GM12878 (cell line): ENCODE measurements at regions of chr1 and their contacts with region 1.

Region 1: DNA sequence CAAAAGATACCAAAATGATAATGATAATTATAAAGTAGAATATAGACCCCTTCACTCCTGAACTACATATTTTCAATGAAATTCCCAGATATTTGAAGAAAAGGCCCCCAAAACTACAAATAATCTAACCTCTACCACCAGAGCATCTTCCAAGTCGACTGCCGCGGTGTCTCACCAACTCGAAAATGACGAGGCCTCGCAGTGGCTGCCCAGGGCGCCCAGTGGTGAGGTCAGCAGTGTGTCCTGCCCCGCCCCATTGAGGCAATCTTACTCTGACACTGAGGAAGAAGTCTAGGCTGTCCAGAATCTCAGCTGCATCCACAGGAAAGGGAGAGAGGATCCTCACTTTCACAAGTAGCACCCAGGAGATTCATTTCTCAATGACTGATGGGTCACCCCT is 5.2 kb downstream of the DUSP10 start:
- DNase-seq: no peak
- ATAC-seq: peak; percentile 47
- H3K4me3 ChIP-seq: peak overlapping the region; percentile 90
- H3K27ac ChIP-seq: no peak overlapping the region
- H3K4me1 ChIP-seq: peaks cover 11% of the 10 kb centered on the region
- H3K27me3 ChIP-seq: no peaks in the 10 kb centered on the region
- CTCF ChIP-seq: no peak
- EP300 ChIP-seq: no peak
- POLR2A ChIP-seq: 0 out of 2 replicates have a peak, but pooled peaks have one; percentile 25
- RAD21 ChIP-seq: no peak

Region 2: DNA sequence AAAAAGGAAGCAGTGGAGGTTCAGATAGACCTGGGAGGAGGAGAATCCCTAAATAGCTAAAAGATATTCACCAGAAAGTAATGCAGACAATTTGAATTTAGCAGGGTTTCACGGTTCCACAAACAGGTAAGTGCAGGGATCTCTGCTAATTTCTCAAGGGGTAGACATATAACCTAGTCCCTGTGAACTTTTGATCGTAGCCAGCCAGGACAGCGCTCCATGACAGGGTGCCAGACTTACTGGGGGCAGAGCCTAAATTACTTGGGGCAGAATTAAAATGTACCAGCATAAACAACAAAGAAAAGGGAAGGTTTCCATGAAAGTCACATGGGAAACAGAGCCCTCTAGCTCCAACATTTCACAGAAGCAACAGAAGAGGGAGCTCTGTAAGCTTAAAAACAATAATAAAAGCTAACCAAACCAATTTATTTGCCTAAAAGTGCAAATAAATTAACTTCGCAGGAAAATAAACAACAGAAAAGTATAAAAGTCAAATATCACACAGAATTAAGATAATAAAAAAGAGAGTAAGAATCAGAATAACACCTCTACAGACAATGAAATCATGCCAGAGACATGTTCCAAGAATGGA is 193.1 kb before region 1 on chr1:
- CTCF ChIA-PET with region 1: interaction called, 45 read pairs
- POLR2A ChIA-PET with region 1: no interaction called
- RAD21 ChIA-PET with region 1: interaction called, 50 read pairs
- SMC1A ChIA-PET with region 1: interaction called, 52 read pairs
- in situ Hi-C with region 1: no loop called
- intact Hi-C with region 1: loop called (anchors 2 kb)
- DNase-seq: no peak
- ATAC-seq: peak; percentile 64
- H3K4me3 ChIP-seq: no peak overlapping the region
- H3K27ac ChIP-seq: no peak overlapping the region
- H3K4me1 ChIP-seq: no peaks in the 10 kb centered on the region
- H3K27me3 ChIP-seq: no peaks in the 10 kb centered on the region
- CTCF ChIP-seq: peak; percentile 39 to 57 (median 53); a peak in 5 of 6 replicates
- EP300 ChIP-seq: no peak
- POLR2A ChIP-seq: no peak
- RAD21 ChIP-seq: peak; percentile 66

Region 3: GRCh38 chr1:221715321-221716169 is 21.2 kb before region 1 on chr1:
- CTCF ChIA-PET with region 1: interaction called, 10 read pairs
- POLR2A ChIA-PET with region 1: interaction called, 194 read pairs
- RAD21 ChIA-PET with region 1: interaction called, 235 read pairs
- SMC1A ChIA-PET with region 1: interaction called, 199 read pairs
- in situ Hi-C with region 1: no loop called
- intact Hi-C with region 1: no loop called
- DNase-seq: no peak
- ATAC-seq: no peak
- H3K4me3 ChIP-seq: no peak overlapping the region
- H3K27ac ChIP-seq: peak overlapping the region; percentile 25; the same call in 1 of the 2 replicates
- H3K4me1 ChIP-seq: peaks cover 32% of the 10 kb centered on the region
- H3K27me3 ChIP-seq: no peaks in the 10 kb centered on the region
- CTCF ChIP-seq: no peak
- EP300 ChIP-seq: no peak
- POLR2A ChIP-seq: no peak
- RAD21 ChIP-seq: no peak

Region 4: GRCh38 chr1:221725735-221726672 is 10.7 kb before region 1 on chr1:
- CTCF ChIA-PET with region 1: interaction called, 25 read pairs
- POLR2A ChIA-PET with region 1: interaction called, 92 read pairs
- RAD21 ChIA-PET with region 1: interaction called, 66 read pairs
- SMC1A ChIA-PET with region 1: interaction called, 199 read pairs
- in situ Hi-C with region 1: no loop called
- intact Hi-C with region 1: no loop called
- DNase-seq: no peak
- ATAC-seq: peak; percentile 67
- H3K4me3 ChIP-seq: peak overlapping the region; percentile 6; the same call in 1 of the 2 replicates
- H3K27ac ChIP-seq: peak overlapping the region; percentile 92
- H3K4me1 ChIP-seq: peaks cover 52% of the 10 kb centered on the region
- H3K27me3 ChIP-seq: no peaks in the 10 kb centered on the region
- CTCF ChIP-seq: no peak
- EP300 ChIP-seq: no peak
- POLR2A ChIP-seq: no peak
- RAD21 ChIP-seq: no peak